ENCODE measurements at regions of chr1 and their contacts with region 1.

Region 1: GRCh38 chr1:90721210-90722194 is 4.4 kb upstream of the BARHL2 start:
- DNase-seq: no peak
- H3K4me3 ChIP-seq: no peak overlapping the region
- H3K27ac ChIP-seq: no peak overlapping the region
- H3K4me1 ChIP-seq: peaks cover 11 to 76% (median 37%) of the 10 kb centered on the region in 3 donors
- H3K27me3 ChIP-seq: peaks cover 32 to 100% (median 76%) of the 10 kb centered on the region in 4 donors
- CTCF ChIP-seq: peak; percentile 31 to 71 (median 66)
- POLR2A ChIP-seq: no peak

Region 2: GRCh38 chr1:90964444-90965035 is 243.0 kb after region 1 on chr1:
- intact Hi-C with region 1: loop called (anchors 10 kb)
- DNase-seq: no peak
- H3K4me3 ChIP-seq: no peak overlapping the region
- H3K27ac ChIP-seq: no peak overlapping the region
- H3K4me1 ChIP-seq: peaks cover 0 to 7% (median 0%) of the 10 kb centered on the region in 3 donors
- H3K27me3 ChIP-seq: no peaks in the 10 kb centered on the region
- CTCF ChIP-seq: peak in 5 of 6 experiments; percentile 14 to 56 (median 22)
- POLR2A ChIP-seq: no peak

Region 3: DNA sequence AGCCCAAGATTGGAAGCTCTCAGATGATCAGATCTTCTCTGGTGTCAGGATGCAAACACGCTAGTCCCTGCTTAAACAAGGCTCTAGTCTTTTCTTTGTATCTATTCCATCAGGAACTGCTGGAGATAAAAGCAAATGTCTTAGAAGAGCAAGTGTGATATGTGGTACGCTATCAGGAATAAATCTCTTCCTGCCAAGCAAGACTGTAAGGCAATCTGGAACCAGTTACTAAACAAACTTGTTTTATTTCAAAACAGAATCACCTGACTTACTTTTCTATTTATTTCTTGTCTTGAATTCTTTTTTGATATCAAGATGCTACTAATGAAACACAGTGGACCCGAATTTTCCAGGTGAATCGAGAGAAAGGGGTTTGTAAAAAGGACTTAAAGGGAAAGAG is 440.2 kb after region 1 on chr1:
- intact Hi-C with region 1: loop called (anchors 5 kb)
- DNase-seq: no peak
- H3K4me3 ChIP-seq: no peak overlapping the region
- H3K27ac ChIP-seq: no peak overlapping the region
- H3K4me1 ChIP-seq: no peaks in the 10 kb centered on the region
- H3K27me3 ChIP-seq: no peaks in the 10 kb centered on the region
- CTCF ChIP-seq: no peak
- POLR2A ChIP-seq: no peak

Measured in esophagus squamous epithelium (tissue), 5 donors.